Activated T-helper 1 cell treated with anti-CD3 and anti-CD28 coated beads, Interleukin-12 subunit alpha, Interleukin-12 subunit beta, Interleukin-2, Interleukin-4 antibody, amounts not matched to agents 30 ng/mL and 10 ng/mL and 1 ng/mL, durations not matched to agents 14 hours and 24 hours and 36 hours (primary cell): ENCODE measurements at regions of chr3 and their contacts with region 1.

Region 1: DNA sequence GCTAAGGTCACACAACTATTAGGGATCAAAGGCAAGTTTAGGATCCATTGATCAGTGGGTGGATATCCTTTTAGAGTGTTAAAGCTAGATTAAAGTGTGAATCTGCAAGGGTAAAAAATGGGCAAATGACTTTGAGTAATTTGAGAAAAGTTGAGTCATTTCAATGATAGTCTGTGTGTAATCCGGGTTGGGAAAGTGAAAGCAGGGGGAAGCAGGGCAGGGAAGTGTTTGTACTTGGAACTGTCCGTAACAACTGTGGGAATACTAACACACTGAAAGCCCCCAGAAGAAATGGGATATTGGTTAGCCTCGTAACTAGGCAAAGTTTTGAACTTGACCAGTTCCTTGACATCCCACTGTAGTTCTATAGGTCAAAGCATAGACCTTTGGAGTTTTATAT is 187.2 kb upstream of the SLITRK3 start:
- DNase-seq: no peak
- H3K4me3 Mint-ChIP-seq: no peak overlapping the region
- H3K27ac Mint-ChIP-seq: no peak overlapping the region
- H3K4me1 Mint-ChIP-seq: no peaks in the 10 kb centered on the region
- H3K27me3 Mint-ChIP-seq: no peaks in the 10 kb centered on the region

Region 2: GRCh38 chr3:165568907-165569462 is 185.6 kb after region 1 on chr3:
- intact Hi-C with region 1: no loop called
- DNase-seq: no peak
- H3K4me3 Mint-ChIP-seq: no peak overlapping the region
- H3K27ac Mint-ChIP-seq: no peak overlapping the region
- H3K4me1 Mint-ChIP-seq: no peaks in the 10 kb centered on the region
- H3K27me3 Mint-ChIP-seq: no peaks in the 10 kb centered on the region

Region 3: GRCh38 chr3:165607221-165607620 is 223.8 kb after region 1 on chr3:
- intact Hi-C with region 1: loop called (anchors 10 kb)
- DNase-seq: no peak
- H3K4me3 Mint-ChIP-seq: no peak overlapping the region
- H3K27ac Mint-ChIP-seq: no peak overlapping the region
- H3K4me1 Mint-ChIP-seq: no peaks in the 10 kb centered on the region
- H3K27me3 Mint-ChIP-seq: no peaks in the 10 kb centered on the region

Region 4: DNA sequence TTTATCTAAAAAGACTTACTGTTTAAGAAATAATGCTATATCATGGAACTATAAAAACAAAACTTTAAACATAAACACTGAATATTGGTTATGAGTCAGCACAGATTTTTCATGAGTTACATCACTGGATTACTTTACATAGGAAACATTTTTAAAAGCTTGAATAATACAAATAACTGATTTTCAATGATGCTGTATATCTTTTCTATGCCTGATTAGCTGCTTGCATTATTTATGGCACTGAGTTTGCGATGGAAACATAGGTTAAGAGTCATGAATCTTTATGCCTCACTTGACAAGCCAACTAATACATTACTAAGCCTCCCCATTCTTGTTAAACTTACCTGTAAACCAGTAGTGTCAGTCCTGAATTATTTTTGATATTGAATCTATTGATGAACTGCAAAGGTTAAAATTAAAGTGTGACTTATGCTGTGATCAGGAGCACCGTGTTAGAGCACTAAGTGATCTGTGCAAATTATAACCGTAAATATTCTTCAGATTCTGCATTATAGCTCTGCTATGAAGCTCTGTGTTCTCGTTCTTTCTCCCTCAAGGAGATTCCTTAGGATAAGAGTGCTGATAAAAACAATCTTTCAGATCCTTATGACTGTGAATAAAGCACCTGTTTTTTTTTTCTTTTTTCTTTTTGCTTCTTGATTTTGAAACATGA is 891.1 kb after region 1 on chr3:
- intact Hi-C with region 1: loop called (anchors 5 kb)
- DNase-seq: no peak
- H3K4me3 Mint-ChIP-seq: no peak overlapping the region
- H3K27ac Mint-ChIP-seq: no peak overlapping the region
- H3K4me1 Mint-ChIP-seq: no peaks in the 10 kb centered on the region
- H3K27me3 Mint-ChIP-seq: no peaks in the 10 kb centered on the region